AG04450 (cell line): ENCODE measurements at regions of chr1 and their contacts with region 1.

Region 1: DNA sequence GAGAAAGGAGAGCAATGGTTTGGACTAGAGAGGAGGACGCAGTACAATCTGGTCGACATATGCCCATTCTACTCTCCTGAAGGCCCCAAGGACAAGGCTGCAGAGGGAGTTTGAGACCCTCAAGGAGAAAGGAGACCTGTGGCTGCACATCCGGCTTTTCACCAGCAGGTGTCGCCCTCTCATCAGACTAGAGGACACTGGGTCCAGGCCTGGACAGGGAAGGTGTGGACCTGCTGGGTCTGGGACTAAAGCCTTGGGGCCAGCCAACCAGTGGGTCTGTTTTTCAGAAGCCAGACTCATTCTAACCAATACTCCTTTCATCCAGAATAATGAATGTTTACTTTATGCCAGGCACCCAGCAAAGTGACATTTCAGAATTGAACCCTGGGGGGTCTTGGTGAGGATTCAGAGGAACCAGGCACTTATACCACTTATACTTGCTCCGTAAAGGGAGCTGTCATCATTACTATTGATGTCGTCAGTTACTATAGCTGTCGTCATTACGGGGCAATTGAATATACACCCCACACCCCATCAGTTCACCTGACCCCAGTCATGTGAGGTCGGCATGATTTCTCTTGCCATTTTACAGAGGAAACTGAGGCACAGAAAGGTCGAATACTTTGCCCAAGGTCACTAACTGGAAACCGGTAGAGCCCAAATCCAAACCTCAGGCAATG is 5.1 kb downstream of the SRARP start:
- DNase-seq: no peak
- H3K4me3 ChIP-seq: no peak overlapping the region
- H3K27ac ChIP-seq: no peak overlapping the region
- H3K27me3 ChIP-seq: no peaks in the 10 kb centered on the region
- CTCF ChIP-seq: peak; percentile 95

Region 2: GRCh38 chr1:16032388-16033103 is 23.4 kb after region 1 on chr1:
- CTCF ChIA-PET with region 1: interaction called, 31 read pairs
- POLR2A ChIA-PET with region 1: no interaction called
- DNase-seq: peak; percentile 62
- H3K4me3 ChIP-seq: no peak overlapping the region
- H3K27ac ChIP-seq: no peak overlapping the region
- H3K27me3 ChIP-seq: peaks cover 4% of the 10 kb centered on the region
- CTCF ChIP-seq: peak; percentile 97

Region 3: DNA sequence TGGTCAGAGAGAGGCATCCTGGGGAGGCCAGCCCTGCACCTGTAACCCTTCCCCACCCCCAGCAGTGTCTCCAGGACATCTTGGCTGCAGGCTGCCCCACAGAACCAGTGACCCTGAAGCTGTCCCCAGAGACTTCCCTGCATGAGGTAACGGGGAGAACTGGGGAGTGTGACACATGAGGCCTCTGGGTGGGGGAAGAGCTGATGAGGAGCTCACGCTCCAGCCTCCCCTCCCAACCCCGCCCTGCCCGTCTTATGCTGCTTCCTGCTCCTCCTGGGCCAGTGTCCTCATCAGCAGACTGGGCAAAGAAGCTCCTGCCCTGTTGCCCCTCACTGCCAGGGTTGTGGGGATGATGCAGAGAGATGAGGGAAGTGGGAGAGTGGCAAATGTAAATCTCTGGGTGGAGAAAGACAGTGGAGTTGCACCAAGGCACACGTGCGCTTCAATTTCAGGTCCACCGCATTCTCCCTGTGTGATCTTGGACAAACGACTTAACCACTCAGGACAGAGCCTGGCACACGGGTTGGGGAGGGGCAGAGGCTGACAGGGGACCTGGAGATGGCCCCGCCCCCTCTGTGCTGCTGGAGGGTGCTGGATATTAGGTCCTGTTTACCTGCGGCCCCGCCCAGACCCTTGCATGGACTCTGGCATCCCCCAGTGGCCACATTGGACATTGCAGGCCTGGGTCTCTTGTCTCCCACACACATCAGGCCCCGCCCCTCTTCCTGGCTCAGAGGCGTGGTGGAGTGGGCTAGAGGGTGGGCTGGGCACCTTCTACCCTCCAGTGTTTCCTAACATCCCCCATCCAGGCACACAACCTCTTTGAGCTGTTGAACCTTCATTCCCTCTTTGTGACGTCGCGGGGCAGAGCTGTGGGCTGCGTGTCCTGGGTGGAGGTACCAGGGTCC is 46.7 kb after region 1 on chr1:
- CTCF ChIA-PET with region 1: interaction called, 14 read pairs
- POLR2A ChIA-PET with region 1: interaction called, 3 read pairs
- DNase-seq: peak; percentile 15
- H3K4me3 ChIP-seq: no peak overlapping the region
- H3K27ac ChIP-seq: no peak overlapping the region
- H3K27me3 ChIP-seq: peaks cover 10% of the 10 kb centered on the region
- CTCF ChIP-seq: peak; percentile 96

Region 4: DNA sequence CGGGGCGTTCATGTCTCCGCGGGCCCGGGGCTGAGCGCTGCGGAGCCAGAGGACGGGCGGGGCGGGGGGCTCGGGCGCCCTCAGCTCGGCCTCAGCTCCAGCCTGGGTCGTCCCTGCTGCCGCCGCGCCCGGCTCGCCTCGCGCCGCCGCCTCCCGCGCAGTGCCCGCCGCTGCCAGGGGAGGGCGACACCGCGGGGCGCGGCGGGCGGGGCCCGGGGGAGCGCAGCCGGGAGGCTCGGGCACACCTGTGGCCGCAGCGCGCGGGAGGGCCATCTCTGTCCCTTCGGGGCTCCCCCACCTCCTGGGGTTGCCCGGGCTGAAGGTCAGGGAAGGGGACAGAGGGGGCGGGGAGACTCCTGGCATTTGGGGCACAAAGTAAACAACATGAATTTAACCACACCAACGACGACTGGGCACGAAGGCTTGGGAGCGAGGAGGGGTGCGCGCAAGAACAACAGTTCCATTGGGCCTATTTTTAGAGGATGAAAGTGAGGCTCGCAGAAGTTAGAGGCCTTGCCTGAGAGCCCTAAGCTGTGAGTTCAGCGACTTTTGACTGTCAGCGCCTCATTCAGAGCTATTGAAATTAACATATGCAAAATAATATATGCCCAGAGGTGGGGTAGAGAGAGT is 64.4 kb after region 1 on chr1 and contains the start of gene FAM131C:
- CTCF ChIA-PET with region 1: interaction called, 12 read pairs
- POLR2A ChIA-PET with region 1: no interaction called
- DNase-seq: no peak
- H3K4me3 ChIP-seq: peak within 1 kb of the TSS; percentile 52
- H3K27ac ChIP-seq: no peak within 1 kb of the TSS
- H3K27me3 ChIP-seq: peaks cover 5% of the 10 kb centered on the region
- CTCF ChIP-seq: peak; percentile 13; the same call in 1 of the 2 replicates
- polyA plus RNA-seq, gene FAM131C: 0.20 and 0.32 TPM in 2 replicates

Region 5: GRCh38 chr1:16111771-16112595 is 102.8 kb after region 1 on chr1:
- CTCF ChIA-PET with region 1: no interaction called
- POLR2A ChIA-PET with region 1: no interaction called
- DNase-seq: peak; percentile 53
- H3K4me3 ChIP-seq: no peak overlapping the region
- H3K27ac ChIP-seq: peak overlapping the region; percentile 11
- H3K27me3 ChIP-seq: peaks cover 2% of the 10 kb centered on the region
- CTCF ChIP-seq: no peak

Region 6: GRCh38 chr1:16155532-16156410 is 146.6 kb after region 1 on chr1 and contains the start of gene EPHA2:
- CTCF ChIA-PET with region 1: no interaction called
- POLR2A ChIA-PET with region 1: no interaction called
- DNase-seq: peak; percentile 55
- H3K4me3 ChIP-seq: peak within 1 kb of the TSS; percentile 88
- H3K27ac ChIP-seq: peak within 1 kb of the TSS; percentile 80
- H3K27me3 ChIP-seq: no peaks in the 10 kb centered on the region
- CTCF ChIP-seq: no peak
- polyA plus RNA-seq, gene EPHA2: 19.1 and 26.0 TPM in 2 replicates